ENCODE measurements at regions of chr11 and their contacts with region 1.

Region 1: GRCh38 chr11:73288873-73289707 is 17.0 kb downstream of the P2RY6 start:
- DNase-seq: peak; percentile 92
- H3K4me3 ChIP-seq: peak overlapping the region in 1 of 2 experiments; percentile 25; a peak in 1 of 4 replicates
- H3K27ac ChIP-seq: peak overlapping the region; percentile 35 to 48
- H3K4me1 ChIP-seq: peaks cover 9 to 29% of the 10 kb centered on the region in 2 experiments
- H3K27me3 ChIP-seq: no peaks in the 10 kb centered on the region
- CTCF ChIP-seq: peak; percentile 95
- EP300 ChIP-seq: no peak
- RAD21 ChIP-seq: peak; percentile 97

Region 2: GRCh38 chr11:73164803-73165540 is 124.1 kb before region 1 on chr11:
- CTCF ChIA-PET with region 1: interaction called, 11 read pairs
- POLR2A ChIA-PET with region 1: no interaction called
- DNase-seq: no peak
- H3K4me3 ChIP-seq: no peak overlapping the region
- H3K27ac ChIP-seq: no peak overlapping the region
- H3K4me1 ChIP-seq: peaks cover 0 to 2% of the 10 kb centered on the region in 2 experiments; a peak in 1 of 4 replicates
- H3K27me3 ChIP-seq: no peaks in the 10 kb centered on the region
- CTCF ChIP-seq: no peak
- EP300 ChIP-seq: no peak
- RAD21 ChIP-seq: no peak

Region 3: GRCh38 chr11:73218106-73218829 is 70.8 kb before region 1 on chr11 and contains the start of gene P2RY2:
- CTCF ChIA-PET with region 1: interaction called, 15 read pairs
- POLR2A ChIA-PET with region 1: interaction called, 3 read pairs
- DNase-seq: peak; percentile 86
- H3K4me3 ChIP-seq: peak within 1 kb of the TSS; percentile 44 to 51
- H3K27ac ChIP-seq: no peak within 1 kb of the TSS
- H3K4me1 ChIP-seq: peaks cover 0 to 4% of the 10 kb centered on the region in 2 experiments; a peak in 1 of 4 replicates
- H3K27me3 ChIP-seq: peaks cover 8% of the 10 kb centered on the region
- CTCF ChIP-seq: peak; percentile 49
- EP300 ChIP-seq: no peak
- RAD21 ChIP-seq: 0 out of 2 replicates have a peak, but pooled peaks have one; percentile 6
- polyA plus RNA-seq, gene P2RY2: 0.12 and 0.13 TPM in 2 replicates

Region 4: DNA sequence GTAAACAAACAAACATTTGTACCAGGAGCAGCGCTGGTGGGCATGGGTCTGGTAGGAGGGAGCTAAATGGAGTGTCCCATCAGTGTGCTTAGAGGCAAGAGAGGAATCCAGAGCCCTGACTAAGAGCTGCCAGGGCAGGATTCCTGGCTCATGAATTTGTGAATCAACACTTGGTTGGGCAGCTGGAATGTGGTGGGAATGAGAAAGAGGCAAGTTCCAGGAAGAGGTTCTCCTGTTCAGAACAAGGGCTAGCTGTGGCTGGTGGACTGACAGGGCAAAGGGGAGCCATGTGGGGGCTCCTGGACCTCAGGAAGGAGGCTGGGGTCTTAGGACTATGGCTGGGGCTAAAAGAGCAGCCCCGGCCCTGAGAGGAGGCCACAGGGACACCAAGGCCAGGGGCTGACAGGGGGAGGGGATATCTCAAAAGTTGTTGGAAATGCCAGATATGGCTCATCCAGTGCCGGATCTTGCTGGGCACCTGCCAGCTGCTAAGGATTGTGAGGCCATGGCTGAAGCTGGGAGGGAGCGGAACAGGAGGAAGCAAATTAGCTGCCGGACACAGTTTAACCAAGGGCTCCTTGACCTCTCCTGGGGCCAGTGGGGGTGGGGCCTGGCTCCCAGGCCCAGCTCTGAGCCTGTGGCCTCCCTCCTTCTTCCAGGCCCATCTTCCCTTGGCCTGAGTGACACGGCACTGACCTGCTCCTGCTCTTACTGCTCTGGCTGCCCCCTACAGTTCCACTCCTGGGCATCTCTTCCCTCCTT is 31.6 kb before region 1 on chr11:
- CTCF ChIA-PET with region 1: interaction called, 15 read pairs
- POLR2A ChIA-PET with region 1: no interaction called
- DNase-seq: no peak
- H3K4me3 ChIP-seq: no peak overlapping the region
- H3K27ac ChIP-seq: peak overlapping the region; percentile 56 to 98
- H3K4me1 ChIP-seq: peaks cover 12 to 18% of the 10 kb centered on the region in 2 experiments; a peak in 3 of 4 replicates
- H3K27me3 ChIP-seq: no peaks in the 10 kb centered on the region
- CTCF ChIP-seq: no peak
- EP300 ChIP-seq: peak in 1 of 2 experiments; percentile 53; a peak in 1 of 4 replicates
- RAD21 ChIP-seq: no peak

Region 5: GRCh38 chr11:73314117-73314961 is 25.2 kb after region 1 on chr11:
- CTCF ChIA-PET with region 1: interaction called, 159 read pairs
- POLR2A ChIA-PET with region 1: no interaction called
- DNase-seq: no peak
- H3K4me3 ChIP-seq: peak overlapping the region in 1 of 2 experiments; percentile 86; a peak in 1 of 4 replicates
- H3K27ac ChIP-seq: peak overlapping the region; percentile 54 to 82
- H3K4me1 ChIP-seq: peaks cover 78 to 79% of the 10 kb centered on the region in 2 experiments; a peak in 3 of 4 replicates
- H3K27me3 ChIP-seq: no peaks in the 10 kb centered on the region
- CTCF ChIP-seq: no peak; the same call in 1 of the 2 replicates
- EP300 ChIP-seq: no peak
- RAD21 ChIP-seq: no peak

Region 6: GRCh38 chr11:73350908-73351636 is 62.0 kb after region 1 on chr11:
- CTCF ChIA-PET with region 1: interaction called, 24 read pairs
- POLR2A ChIA-PET with region 1: no interaction called
- DNase-seq: peak; percentile 90
- H3K4me3 ChIP-seq: no peak overlapping the region; a peak in 1 of 4 replicates
- H3K27ac ChIP-seq: no peak overlapping the region
- H3K4me1 ChIP-seq: no peaks in the 10 kb centered on the region; a peak in 1 of 4 replicates
- H3K27me3 ChIP-seq: no peaks in the 10 kb centered on the region
- CTCF ChIP-seq: peak; percentile 99
- EP300 ChIP-seq: no peak
- RAD21 ChIP-seq: peak; percentile 79